ENCODE measurements at regions of chr3 and their contacts with region 1.

Region 1: GRCh38 chr3:10041034-10041433 is 14.8 kb downstream of the FANCD2 start:
- DNase-seq: no peak
- ATAC-seq: no peak
- H3K4me3 Mint-ChIP-seq: no peak overlapping the region
- H3K27ac Mint-ChIP-seq: no peak overlapping the region
- H3K4me1 Mint-ChIP-seq: no peaks in the 10 kb centered on the region
- H3K27me3 Mint-ChIP-seq: no peaks in the 10 kb centered on the region

Region 2: DNA sequence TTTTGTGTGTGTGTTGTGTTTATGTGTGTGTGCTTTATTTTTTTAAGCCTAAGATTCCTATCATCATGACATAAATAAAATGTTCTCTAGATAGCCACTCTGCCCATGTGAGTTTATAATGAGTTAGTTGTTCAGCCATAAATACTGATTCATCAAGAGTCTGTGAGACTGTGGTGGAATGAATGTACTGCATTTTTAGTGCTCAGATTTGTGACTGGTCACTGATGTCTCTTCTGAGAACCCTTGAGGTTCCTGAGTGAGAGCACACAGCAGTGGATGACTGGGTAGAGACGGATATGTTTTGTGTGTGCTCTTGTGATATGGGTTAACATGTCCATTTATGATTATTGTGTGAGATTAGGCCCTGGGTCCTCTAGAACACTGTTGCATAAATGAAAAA is 592.4 kb before region 1 on chr3:
- CTCF ChIA-PET with region 1: no interaction called
- POLR2A ChIA-PET with region 1: no interaction called
- intact Hi-C with region 1: loop called in 1 of 2 experiments (anchors 10 kb)
- DNase-seq: no peak
- ATAC-seq: peak; percentile 57
- H3K4me3 Mint-ChIP-seq: no peak overlapping the region
- H3K27ac Mint-ChIP-seq: peak overlapping the region; percentile 32
- H3K4me1 Mint-ChIP-seq: peaks cover 19% of the 10 kb centered on the region
- H3K27me3 Mint-ChIP-seq: no peaks in the 10 kb centered on the region

Region 3: GRCh38 chr3:10085736-10086135 is 44.7 kb after region 1 on chr3:
- CTCF ChIA-PET with region 1: no interaction called
- POLR2A ChIA-PET with region 1: no interaction called
- intact Hi-C with region 1: loop called in 1 of 2 experiments (anchors 5 kb)
- DNase-seq: no peak
- ATAC-seq: no peak
- H3K4me3 Mint-ChIP-seq: no peak overlapping the region
- H3K27ac Mint-ChIP-seq: no peak overlapping the region
- H3K4me1 Mint-ChIP-seq: no peaks in the 10 kb centered on the region
- H3K27me3 Mint-ChIP-seq: no peaks in the 10 kb centered on the region